ENCODE measurements at regions of chr7 and their contacts with region 1.

Region 1: DNA sequence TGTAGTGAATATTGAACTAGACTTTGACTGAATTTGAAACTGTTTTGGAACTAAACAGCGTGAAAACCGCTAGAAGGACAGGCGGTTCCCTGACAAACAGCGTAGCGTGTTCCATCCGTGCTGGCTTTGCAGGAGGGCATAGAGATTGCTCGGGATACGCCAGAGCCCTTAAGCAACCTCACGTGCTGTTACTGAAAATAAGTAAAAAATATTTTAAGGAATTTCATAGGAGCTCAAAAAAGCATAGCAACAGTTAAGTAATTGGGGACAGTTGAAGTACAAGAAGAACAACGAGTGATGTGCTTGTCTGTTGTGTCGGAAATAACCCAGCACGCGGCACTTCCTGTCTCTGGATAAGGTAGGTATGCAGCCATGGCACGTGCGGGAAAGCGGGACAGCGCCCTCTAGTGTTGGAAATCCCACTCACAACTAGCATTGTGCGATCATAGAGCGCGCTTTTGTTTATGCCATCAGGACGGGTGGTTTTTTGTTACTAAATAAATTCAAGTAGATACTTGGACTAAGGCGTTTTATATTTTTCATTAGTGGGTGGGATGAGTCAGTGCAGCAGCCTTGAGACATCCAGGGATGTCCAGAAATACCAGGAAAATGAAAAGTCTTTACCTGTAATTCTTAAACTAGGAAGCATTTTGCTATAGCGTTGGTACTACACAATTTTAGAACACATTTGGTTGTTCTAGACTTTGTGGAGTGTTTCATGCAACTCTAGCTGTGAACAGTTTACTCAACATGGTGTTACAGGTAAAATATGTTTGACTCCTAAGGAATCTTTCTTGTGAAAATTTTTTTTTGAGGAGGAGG is 50.4 kb downstream of the DNAJB6 start:
- DNase-seq: peak; percentile 84
- H3K4me3 ChIP-seq: no peak overlapping the region
- H3K27ac ChIP-seq: no peak overlapping the region
- H3K4me1 ChIP-seq: peaks cover 6% of the 10 kb centered on the region
- H3K27me3 ChIP-seq: no peaks in the 10 kb centered on the region
- CTCF ChIP-seq: peak; percentile 85 to 91
- POLR2A ChIP-seq: no peak

Region 2: GRCh38 chr7:156969972-156970420 is 417.2 kb before region 1 on chr7:
- CTCF ChIA-PET with region 1: no interaction called
- POLR2A ChIA-PET with region 1: no interaction called
- dilution Hi-C with region 1: no loop called
- intact Hi-C with region 1: loop called (anchors 1 kb)
- DNase-seq: peak; percentile 15
- H3K4me3 ChIP-seq: no peak overlapping the region
- H3K27ac ChIP-seq: no peak overlapping the region
- H3K4me1 ChIP-seq: no peaks in the 10 kb centered on the region
- H3K27me3 ChIP-seq: no peaks in the 10 kb centered on the region
- CTCF ChIP-seq: peak; percentile 20 to 22
- POLR2A ChIP-seq: no peak

Region 3: DNA sequence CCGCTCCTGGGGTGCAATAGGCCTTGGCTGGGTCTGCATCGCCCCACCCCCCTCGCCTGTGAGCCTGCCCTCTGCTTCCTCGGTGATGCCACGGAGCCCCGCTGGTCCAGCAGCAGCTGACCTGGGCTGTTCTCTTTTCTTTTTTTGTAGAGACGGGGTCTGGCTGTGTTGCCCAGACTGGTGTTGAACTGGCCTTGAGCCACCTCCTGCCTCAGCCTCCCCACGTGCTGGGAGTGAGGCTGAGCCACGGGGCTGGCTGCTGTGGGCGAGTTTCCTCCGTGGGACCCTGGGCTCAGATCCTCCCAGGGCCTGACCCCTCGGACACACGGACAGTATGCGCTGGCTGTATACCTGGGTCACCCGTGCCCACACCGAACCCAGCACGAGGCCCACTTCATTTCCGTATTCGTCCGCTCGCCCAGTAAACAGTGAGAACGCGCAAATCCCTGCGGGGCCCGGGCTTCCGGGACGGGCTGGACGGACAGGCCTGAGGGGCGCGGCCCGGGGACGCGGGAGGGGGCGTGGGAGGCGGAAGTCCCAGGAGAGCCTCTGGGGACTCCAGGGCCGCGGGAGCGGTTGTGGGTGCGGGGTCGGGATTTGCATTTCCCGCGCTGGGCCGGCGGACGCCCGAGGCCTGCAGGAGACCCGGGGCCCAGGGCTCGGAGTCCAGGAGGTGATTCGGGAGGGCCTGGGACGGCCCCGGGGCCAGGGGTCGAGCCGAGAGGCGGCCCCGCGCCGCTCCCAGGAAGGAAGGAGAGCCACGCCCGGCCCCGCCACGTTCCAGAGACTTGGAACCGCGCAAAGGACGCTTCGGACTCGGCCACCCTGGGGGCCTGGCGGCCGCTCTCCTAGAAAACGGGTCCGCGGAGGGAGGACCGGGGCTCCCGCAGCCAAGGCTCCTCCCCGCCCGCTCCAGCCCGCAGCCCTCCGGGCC is 108.1 kb before region 1 on chr7:
- CTCF ChIA-PET with region 1: no interaction called
- POLR2A ChIA-PET with region 1: no interaction called
- dilution Hi-C with region 1: no loop called
- intact Hi-C with region 1: loop called (anchors 2 kb)
- DNase-seq: no peak
- H3K4me3 ChIP-seq: peak overlapping the region; percentile 18 to 43 (median 27)
- H3K27ac ChIP-seq: no peak overlapping the region
- H3K4me1 ChIP-seq: peaks cover 18% of the 10 kb centered on the region
- H3K27me3 ChIP-seq: no peaks in the 10 kb centered on the region
- CTCF ChIP-seq: no peak
- POLR2A ChIP-seq: no peak

Region 4: GRCh38 chr7:157438121-157439025 is 51.2 kb after region 1 on chr7:
- CTCF ChIA-PET with region 1: no interaction called
- POLR2A ChIA-PET with region 1: no interaction called
- dilution Hi-C with region 1: no loop called
- intact Hi-C with region 1: no loop called
- DNase-seq: no peak
- H3K4me3 ChIP-seq: no peak overlapping the region
- H3K27ac ChIP-seq: no peak overlapping the region
- H3K4me1 ChIP-seq: no peaks in the 10 kb centered on the region
- H3K27me3 ChIP-seq: no peaks in the 10 kb centered on the region
- CTCF ChIP-seq: no peak
- POLR2A ChIP-seq: no peak